Activated B cell treated with CpG ODN at 0.5 μM for 24 hours (primary cell): ENCODE measurements at regions of chr13 and their contacts with region 1.

Region 1: GRCh38 chr13:79480954-79481684 is at the start of gene NDFIP2:
- DNase-seq: peak; percentile 67
- ATAC-seq: peak; percentile 82
- H3K4me3 Mint-ChIP-seq: peak within 1 kb of the TSS; percentile 85
- H3K27ac Mint-ChIP-seq: peak within 1 kb of the TSS; percentile 37
- H3K4me1 Mint-ChIP-seq: peaks cover 16% of the 10 kb centered on the region
- H3K27me3 Mint-ChIP-seq: peaks cover 38% of the 10 kb centered on the region
- CTCF ChIP-seq: no peak
- total RNA-seq, gene NDFIP2: 2.8 and 3.8 TPM in 2 replicates

Region 2: DNA sequence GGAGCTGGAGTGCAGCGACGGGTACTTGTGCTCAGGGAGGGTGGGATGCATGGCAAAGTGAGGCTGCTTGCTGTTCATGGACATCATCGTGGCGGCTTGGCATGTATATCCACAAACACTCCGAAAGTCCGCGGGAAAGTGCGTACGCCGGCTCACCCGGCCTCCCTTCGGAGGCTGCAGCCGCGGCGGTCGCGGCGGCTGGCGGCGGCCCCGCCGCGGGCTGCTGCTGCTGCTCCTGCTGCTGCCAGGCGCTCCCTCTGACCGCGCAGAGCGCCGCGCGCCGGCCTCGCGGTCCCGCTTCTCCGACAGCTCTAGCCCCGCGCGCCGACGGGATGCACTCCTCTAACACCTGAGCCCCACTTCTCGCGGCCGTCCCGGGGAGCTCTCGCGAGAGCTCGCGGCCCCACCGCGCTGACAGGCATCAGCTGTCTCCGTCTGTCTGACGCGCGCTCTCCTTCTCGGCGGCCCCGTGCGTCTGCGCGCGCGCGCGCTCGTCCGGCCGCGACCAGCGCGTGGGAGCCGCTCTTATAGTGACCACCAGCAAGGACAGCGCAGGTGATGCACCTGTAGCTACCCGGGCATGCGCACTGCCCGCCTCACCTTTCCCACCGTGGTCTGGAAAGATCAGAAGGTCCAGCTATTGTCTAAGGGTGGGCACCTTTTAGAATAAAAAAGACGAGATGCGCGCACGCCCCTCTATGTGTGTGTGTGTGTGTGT is 877.7 kb before region 1 on chr13 and contains the start of gene POU4F1:
- CTCF ChIA-PET with region 1: no interaction called
- POLR2A ChIA-PET with region 1: interaction called, 3 read pairs
- intact Hi-C with region 1: loop called (anchors 5 kb)
- DNase-seq: no peak
- ATAC-seq: peak; percentile 80
- H3K4me3 Mint-ChIP-seq: peak within 1 kb of the TSS; percentile 77
- H3K27ac Mint-ChIP-seq: peak within 1 kb of the TSS; percentile 71
- H3K4me1 Mint-ChIP-seq: peaks cover 54% of the 10 kb centered on the region
- H3K27me3 Mint-ChIP-seq: peaks cover 74% of the 10 kb centered on the region
- CTCF ChIP-seq: no peak
- total RNA-seq, gene POU4F1: 0.04 and 0.07 TPM in 2 replicates

Region 3: DNA sequence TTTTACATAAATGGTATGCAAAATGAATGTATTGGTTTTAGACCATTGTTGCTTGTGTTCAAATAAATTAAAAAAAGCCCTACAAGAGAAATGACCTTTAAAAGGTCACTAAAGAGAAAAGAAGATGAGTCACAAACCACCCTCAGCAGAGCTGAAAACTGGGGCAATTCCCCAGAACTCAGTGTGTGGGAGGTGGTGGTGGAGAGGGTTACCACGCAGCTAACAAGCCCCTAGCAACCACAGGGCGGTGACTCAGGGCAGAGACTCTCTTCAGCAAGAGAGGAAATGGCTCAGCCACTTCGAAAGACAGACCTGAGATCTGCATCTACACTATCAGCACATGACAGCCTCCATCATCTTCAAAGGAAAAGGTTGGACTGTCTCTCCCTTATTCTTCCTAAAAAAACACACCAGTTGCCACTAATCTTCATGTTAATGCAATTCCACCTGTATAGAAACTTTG is 29.6 kb before region 1 on chr13:
- CTCF ChIA-PET with region 1: no interaction called
- POLR2A ChIA-PET with region 1: no interaction called
- intact Hi-C with region 1: loop called (anchors 1 kb)
- DNase-seq: peak; percentile 25
- ATAC-seq: peak; percentile 100
- H3K4me3 Mint-ChIP-seq: no peak overlapping the region
- H3K27ac Mint-ChIP-seq: peak overlapping the region; percentile 41
- H3K4me1 Mint-ChIP-seq: peaks cover 17% of the 10 kb centered on the region
- H3K27me3 Mint-ChIP-seq: peaks cover 26% of the 10 kb centered on the region
- CTCF ChIP-seq: no peak

Region 4: GRCh38 chr13:79470666-79471065 is 10.5 kb before region 1 on chr13:
- CTCF ChIA-PET with region 1: no interaction called
- POLR2A ChIA-PET with region 1: interaction called, 3 read pairs
- intact Hi-C with region 1: loop called (anchors 1 kb)
- DNase-seq: no peak
- ATAC-seq: no peak
- H3K4me3 Mint-ChIP-seq: no peak overlapping the region
- H3K27ac Mint-ChIP-seq: no peak overlapping the region
- H3K4me1 Mint-ChIP-seq: no peaks in the 10 kb centered on the region
- H3K27me3 Mint-ChIP-seq: peaks cover 20% of the 10 kb centered on the region
- CTCF ChIP-seq: no peak

Region 5: GRCh38 chr13:79548902-79549301 is 67.8 kb after region 1 on chr13:
- CTCF ChIA-PET with region 1: no interaction called
- POLR2A ChIA-PET with region 1: no interaction called
- intact Hi-C with region 1: no loop called
- DNase-seq: no peak
- ATAC-seq: no peak
- H3K4me3 Mint-ChIP-seq: no peak overlapping the region
- H3K27ac Mint-ChIP-seq: no peak overlapping the region
- H3K4me1 Mint-ChIP-seq: no peaks in the 10 kb centered on the region
- H3K27me3 Mint-ChIP-seq: no peaks in the 10 kb centered on the region
- CTCF ChIP-seq: no peak